ENCODE measurements at regions of chrX and their contacts with region 1.

Region 1: GRCh38 chrX:73076838-73077237 is 2.5 kb downstream of the PABPC1L2A start:
- DNase-seq: no peak
- ATAC-seq: no peak
- H3K4me3 ChIP-seq: no peak overlapping the region
- H3K4me3 Mint-ChIP-seq: no peak overlapping the region
- H3K27ac ChIP-seq: no peak overlapping the region
- H3K27ac Mint-ChIP-seq: no peak overlapping the region
- H3K4me1 ChIP-seq: no peaks in the 10 kb centered on the region
- H3K4me1 Mint-ChIP-seq: no peaks in the 10 kb centered on the region
- H3K27me3 ChIP-seq: no peaks in the 10 kb centered on the region
- H3K27me3 Mint-ChIP-seq: peaks cover 9 to 25% (median 20%) of the 10 kb centered on the region in 5 donors

Region 2: DNA sequence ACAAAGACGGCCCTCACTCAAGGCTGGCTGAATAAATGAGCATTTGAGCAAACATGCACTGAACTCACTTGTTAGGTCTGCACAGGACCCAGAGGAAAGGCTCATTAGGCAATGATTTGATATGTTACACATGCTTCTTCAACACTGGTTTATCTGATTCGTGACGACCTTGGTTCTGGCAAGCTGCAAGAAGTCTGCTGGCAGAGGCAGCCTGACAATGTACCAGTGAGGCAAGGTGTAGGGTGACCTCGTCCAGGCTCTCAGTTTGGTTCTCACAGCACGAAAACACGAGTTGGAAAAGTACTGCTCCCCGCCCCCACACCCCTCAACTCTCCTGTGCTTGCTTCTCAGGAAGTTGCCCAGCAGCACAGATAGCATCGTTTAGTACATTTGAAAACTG is 708.0 kb before region 1 on chrX:
- CTCF ChIA-PET with region 1: no interaction called
- POLR2A ChIA-PET with region 1: no interaction called
- intact Hi-C with region 1: no loop called
- DNase-seq: no peak
- ATAC-seq: no peak
- H3K4me3 ChIP-seq: no peak overlapping the region
- H3K4me3 Mint-ChIP-seq: no peak overlapping the region
- H3K27ac ChIP-seq: no peak overlapping the region
- H3K27ac Mint-ChIP-seq: no peak overlapping the region
- H3K4me1 ChIP-seq: no peaks in the 10 kb centered on the region
- H3K4me1 Mint-ChIP-seq: peaks cover 0 to 4% (median 0%) of the 10 kb centered on the region in 7 donors
- H3K27me3 ChIP-seq: no peaks in the 10 kb centered on the region
- H3K27me3 Mint-ChIP-seq: no peaks in the 10 kb centered on the region

Region 3: GRCh38 chrX:73262992-73263391 is 186.2 kb after region 1 on chrX:
- CTCF ChIA-PET with region 1: no interaction called
- POLR2A ChIA-PET with region 1: no interaction called
- intact Hi-C with region 1: loop called in 1 of 2 experiments (anchors 10 kb)
- DNase-seq: peak in 4 of 9 donors; percentile 6 to 16 (median 11)
- ATAC-seq: no peak
- H3K4me3 ChIP-seq: no peak overlapping the region
- H3K4me3 Mint-ChIP-seq: no peak overlapping the region
- H3K27ac ChIP-seq: no peak overlapping the region
- H3K27ac Mint-ChIP-seq: no peak overlapping the region
- H3K4me1 ChIP-seq: no peaks in the 10 kb centered on the region
- H3K4me1 Mint-ChIP-seq: no peaks in the 10 kb centered on the region
- H3K27me3 ChIP-seq: no peaks in the 10 kb centered on the region
- H3K27me3 Mint-ChIP-seq: peaks cover 0 to 4% (median 0%) of the 10 kb centered on the region in 5 donors